ENCODE measurements at regions of chr9 and their contacts with region 1.

Region 1: GRCh38 chr9:37540634-37541033 is 35.5 kb downstream of the FBXO10 start:
- DNase-seq: no peak

Region 2: DNA sequence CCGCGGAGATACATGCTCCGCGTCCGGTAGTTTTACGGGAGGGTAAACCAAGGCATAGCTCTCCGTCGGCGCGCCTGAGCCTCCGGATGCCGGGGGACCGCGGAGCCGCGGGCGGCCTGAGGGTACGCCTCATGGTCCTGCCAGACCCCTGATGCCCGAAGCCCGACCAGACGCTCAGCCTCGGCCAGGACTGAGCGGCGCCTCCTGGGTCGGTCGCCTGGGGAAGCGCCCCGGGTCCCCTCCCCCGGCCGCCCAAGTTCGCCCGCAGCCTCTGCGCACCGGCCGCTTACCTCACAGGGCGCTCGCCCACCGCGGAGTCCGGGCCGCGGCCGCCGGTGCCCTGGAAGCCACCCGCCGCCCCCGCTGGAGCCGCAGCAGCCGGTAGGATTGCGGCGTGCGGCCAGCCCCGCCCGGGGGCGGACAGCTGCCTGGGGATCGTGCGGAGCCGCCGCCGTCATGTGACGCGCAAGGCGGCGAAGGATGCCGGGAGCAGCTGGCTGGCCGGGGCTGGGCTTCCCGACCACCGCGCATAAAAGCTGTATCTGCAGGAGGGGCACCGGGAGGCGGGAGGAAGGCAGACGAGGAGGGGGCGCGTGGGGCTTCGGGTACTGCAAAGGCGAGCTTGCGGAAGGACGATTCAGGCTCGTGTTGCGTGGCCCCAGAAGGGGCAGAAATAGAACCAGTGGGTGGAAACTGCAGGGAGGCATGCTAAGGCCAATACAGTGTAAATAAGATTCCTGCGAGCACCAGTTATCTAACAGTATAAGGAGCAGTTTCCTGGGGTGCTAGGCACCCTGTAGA is 35.5 kb after region 1 on chr9 and contains the start of gene FBXO10:
- intact Hi-C with region 1: loop called (anchors 2 kb)
- DNase-seq: peak; percentile 87
- total RNA-seq, gene FBXO10: 5.9 TPM